Heart right ventricle (tissue), 16 donors: ENCODE measurements at regions of chr12 and their contacts with region 1.

Region 1: GRCh38 chr12:22577667-22578066 is 33.3 kb upstream of the C2CD5 start:
- DNase-seq: no peak
- ATAC-seq: no peak
- H3K4me3 ChIP-seq: no peak overlapping the region
- H3K27ac ChIP-seq: no peak overlapping the region
- H3K4me1 ChIP-seq: no peaks in the 10 kb centered on the region
- H3K27me3 ChIP-seq: no peaks in the 10 kb centered on the region
- CTCF ChIP-seq: no peak

Region 2: DNA sequence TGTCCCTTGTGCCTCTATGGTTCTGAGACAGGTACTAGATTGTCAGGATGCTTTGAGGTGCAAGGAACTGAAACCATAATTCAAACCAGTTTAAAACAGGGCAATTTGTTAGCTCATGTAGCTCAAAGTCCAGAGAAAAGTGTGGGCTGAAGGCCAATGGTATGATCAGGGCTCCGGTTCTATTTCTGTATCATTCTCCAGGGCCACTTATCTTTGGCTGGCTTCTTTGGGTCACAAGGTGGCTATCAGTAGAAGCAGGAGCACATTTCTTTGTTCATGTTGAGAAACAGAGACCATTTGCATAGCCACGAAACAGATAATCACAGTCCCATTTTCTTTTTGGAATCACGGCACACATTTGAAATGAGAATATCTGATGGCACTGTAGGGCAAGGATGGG is 342.2 kb after region 1 on chr12:
- intact Hi-C with region 1: loop called in 1 of 10 experiments (anchors 5 kb)
- DNase-seq: no peak
- ATAC-seq: peak in 3 of 8 donors; percentile 43 to 51 (median 49)
- H3K4me3 ChIP-seq: no peak overlapping the region
- H3K27ac ChIP-seq: no peak overlapping the region
- H3K4me1 ChIP-seq: peaks cover 0 to 5% (median 0%) of the 10 kb centered on the region in 9 donors
- H3K27me3 ChIP-seq: no peaks in the 10 kb centered on the region
- CTCF ChIP-seq: no peak